ENCODE measurements at regions of chr7 and their contacts with region 1.

Region 1: GRCh38 chr7:90155206-90155605 is 937 bp downstream of the STEAP1 start:
- DNase-seq: no peak
- H3K4me3 ChIP-seq: no peak overlapping the region
- H3K27me3 ChIP-seq: no peaks in the 10 kb centered on the region; the same call in 1 of the 2 replicates
- CTCF ChIP-seq: no peak

Region 2: DNA sequence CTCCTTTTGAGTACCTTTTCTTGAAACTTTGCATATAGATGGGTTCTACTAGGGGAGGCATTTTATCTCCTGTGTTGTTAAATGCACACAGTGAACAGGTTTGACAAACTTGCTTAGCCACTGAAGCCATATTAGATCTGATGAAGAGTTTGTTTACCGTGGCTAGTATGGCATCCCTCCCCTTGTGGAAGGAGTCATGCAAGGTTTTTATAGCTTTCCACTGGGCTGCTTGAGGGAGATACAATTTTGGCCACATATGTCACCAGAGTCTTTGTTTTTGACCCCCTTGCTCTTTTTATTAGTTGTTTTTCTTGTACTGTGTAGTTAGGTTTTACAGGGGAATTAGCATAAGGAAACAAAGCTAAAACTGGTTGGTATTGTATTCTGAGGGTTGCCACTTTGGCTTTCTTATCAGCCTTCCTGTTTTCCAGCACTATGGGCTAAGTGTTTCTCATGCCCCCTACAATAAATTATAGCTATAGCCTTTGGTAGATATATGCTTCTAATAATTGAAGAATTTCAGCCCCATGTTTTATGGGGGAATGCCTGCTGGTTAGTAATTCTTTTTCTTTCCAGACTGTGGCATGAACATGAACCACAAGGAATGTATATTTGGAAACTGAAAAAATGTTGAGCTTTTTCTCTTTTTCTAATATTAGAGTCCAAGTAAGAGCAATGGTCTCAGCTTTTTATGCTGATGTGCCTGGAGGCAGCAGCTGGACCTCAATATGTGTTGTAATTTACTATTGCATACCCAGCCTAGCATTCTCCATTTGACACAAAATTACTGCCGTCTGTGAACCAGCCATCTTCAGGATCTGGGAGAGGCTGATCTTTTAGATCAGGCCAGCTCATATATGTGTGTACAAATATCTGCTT is 37.9 kb after region 1 on chr7:
- CTCF ChIA-PET with region 1: interaction called, 11 read pairs
- POLR2A ChIA-PET with region 1: no interaction called
- DNase-seq: peak; percentile 76
- H3K4me3 ChIP-seq: no peak overlapping the region
- H3K27me3 ChIP-seq: no peaks in the 10 kb centered on the region
- CTCF ChIP-seq: no peak

Region 3: DNA sequence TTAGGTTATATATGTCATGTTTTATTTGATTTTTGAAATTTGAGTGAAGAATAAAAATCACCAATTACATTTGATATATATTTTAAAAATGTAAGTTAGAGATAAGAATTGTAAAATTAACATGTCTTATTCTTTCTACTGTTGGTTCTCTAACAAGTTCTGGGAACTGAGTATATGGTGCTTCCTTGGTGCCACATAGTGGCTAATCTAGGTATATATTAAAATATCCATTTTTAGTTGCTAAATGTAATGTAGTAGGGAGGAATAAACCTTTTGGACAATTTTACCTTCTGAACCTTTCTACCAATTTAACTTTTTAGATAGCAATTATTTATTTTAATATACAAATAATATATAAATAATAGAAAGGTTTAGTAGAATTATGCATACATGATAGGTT is 107.2 kb after region 1 on chr7:
- CTCF ChIA-PET with region 1: interaction called, 24 read pairs
- POLR2A ChIA-PET with region 1: no interaction called
- DNase-seq: no peak
- H3K4me3 ChIP-seq: no peak overlapping the region
- H3K27me3 ChIP-seq: no peaks in the 10 kb centered on the region
- CTCF ChIP-seq: peak; percentile 43; the same call in 1 of the 2 replicates

Region 4: DNA sequence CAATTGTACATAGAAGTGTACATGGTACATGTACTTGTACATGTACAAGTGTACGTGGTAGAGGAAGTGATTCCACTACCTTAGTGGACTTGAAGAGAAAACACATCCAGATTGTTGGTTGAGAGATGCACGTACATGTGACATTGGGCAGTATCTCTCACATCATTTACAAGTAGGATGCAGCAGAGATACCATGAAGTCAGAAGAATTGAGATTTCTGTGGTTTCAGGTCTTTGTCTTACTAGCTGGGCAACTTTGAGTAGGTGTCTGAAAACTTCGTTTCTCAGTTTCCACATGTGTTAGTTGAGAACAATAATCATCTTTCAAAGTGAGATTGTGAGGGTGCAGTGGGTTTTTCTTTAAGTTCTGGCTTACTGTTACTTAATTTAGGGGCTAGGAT is 269.5 kb after region 1 on chr7:
- CTCF ChIA-PET with region 1: interaction called, 12 read pairs
- POLR2A ChIA-PET with region 1: no interaction called
- DNase-seq: no peak
- H3K4me3 ChIP-seq: no peak overlapping the region
- H3K27me3 ChIP-seq: no peaks in the 10 kb centered on the region
- CTCF ChIP-seq: no peak

Measured in BJ (cell line).